CD8-positive, alpha-beta memory T cell (primary cell): ENCODE measurements at regions of chr6 and their contacts with region 1.

Region 1: GRCh38 chr6:118843685-118844390 is 50.1 kb upstream of the ASF1A start:
- DNase-seq: no peak
- H3K4me3 ChIP-seq: no peak overlapping the region
- H3K4me3 Mint-ChIP-seq: no peak overlapping the region
- H3K27ac ChIP-seq: no peak overlapping the region
- H3K27ac Mint-ChIP-seq: peak overlapping the region in 4 of 8 donors; percentile 0 to 48 (median 36)
- H3K4me1 ChIP-seq: no peaks in the 10 kb centered on the region
- H3K4me1 Mint-ChIP-seq: peaks cover 28 to 49% (median 36%) of the 10 kb centered on the region in 3 donors
- H3K27me3 ChIP-seq: no peaks in the 10 kb centered on the region
- H3K27me3 Mint-ChIP-seq: no peaks in the 10 kb centered on the region

Region 2: DNA sequence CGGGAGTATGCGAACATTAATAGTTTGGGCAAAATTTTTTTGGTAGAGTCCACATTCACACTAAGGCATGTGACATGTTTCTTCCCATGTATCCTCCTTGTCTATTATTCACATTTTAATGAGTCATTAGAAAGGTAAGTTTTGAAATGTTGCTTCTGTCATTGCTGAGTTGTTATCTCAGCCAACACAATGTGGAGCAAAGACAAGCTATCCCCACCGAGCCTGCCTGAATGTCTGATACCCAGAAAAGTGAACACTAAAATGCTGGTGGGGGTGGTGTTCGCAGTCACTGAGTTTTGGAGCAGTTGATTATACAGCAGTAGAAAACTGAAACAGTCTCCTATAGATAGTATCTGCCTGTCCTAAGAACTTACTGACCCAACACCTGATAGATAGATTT is 18.2 kb before region 1 on chr6:
- CTCF ChIA-PET with region 1: no interaction called
- POLR2A ChIA-PET with region 1: no interaction called
- DNase-seq: no peak
- H3K4me3 ChIP-seq: no peak overlapping the region
- H3K4me3 Mint-ChIP-seq: no peak overlapping the region
- H3K27ac ChIP-seq: no peak overlapping the region
- H3K27ac Mint-ChIP-seq: no peak overlapping the region
- H3K4me1 ChIP-seq: no peaks in the 10 kb centered on the region
- H3K4me1 Mint-ChIP-seq: peaks cover 0 to 1% (median 0%) of the 10 kb centered on the region in 3 donors
- H3K27me3 ChIP-seq: no peaks in the 10 kb centered on the region
- H3K27me3 Mint-ChIP-seq: no peaks in the 10 kb centered on the region

Region 3: GRCh38 chr6:118859517-118860064 is 15.8 kb after region 1 on chr6:
- CTCF ChIA-PET with region 1: no interaction called
- POLR2A ChIA-PET with region 1: interaction called, 11 read pairs
- DNase-seq: no peak
- H3K4me3 ChIP-seq: no peak overlapping the region
- H3K4me3 Mint-ChIP-seq: peak overlapping the region in 2 of 7 donors; percentile 20 to 25
- H3K27ac ChIP-seq: no peak overlapping the region
- H3K27ac Mint-ChIP-seq: peak overlapping the region in 3 of 8 donors; percentile 11 to 32 (median 17)
- H3K4me1 ChIP-seq: peaks cover 9% of the 10 kb centered on the region
- H3K4me1 Mint-ChIP-seq: peaks cover 43 to 63% (median 61%) of the 10 kb centered on the region in 3 donors
- H3K27me3 ChIP-seq: no peaks in the 10 kb centered on the region
- H3K27me3 Mint-ChIP-seq: no peaks in the 10 kb centered on the region

Region 4: DNA sequence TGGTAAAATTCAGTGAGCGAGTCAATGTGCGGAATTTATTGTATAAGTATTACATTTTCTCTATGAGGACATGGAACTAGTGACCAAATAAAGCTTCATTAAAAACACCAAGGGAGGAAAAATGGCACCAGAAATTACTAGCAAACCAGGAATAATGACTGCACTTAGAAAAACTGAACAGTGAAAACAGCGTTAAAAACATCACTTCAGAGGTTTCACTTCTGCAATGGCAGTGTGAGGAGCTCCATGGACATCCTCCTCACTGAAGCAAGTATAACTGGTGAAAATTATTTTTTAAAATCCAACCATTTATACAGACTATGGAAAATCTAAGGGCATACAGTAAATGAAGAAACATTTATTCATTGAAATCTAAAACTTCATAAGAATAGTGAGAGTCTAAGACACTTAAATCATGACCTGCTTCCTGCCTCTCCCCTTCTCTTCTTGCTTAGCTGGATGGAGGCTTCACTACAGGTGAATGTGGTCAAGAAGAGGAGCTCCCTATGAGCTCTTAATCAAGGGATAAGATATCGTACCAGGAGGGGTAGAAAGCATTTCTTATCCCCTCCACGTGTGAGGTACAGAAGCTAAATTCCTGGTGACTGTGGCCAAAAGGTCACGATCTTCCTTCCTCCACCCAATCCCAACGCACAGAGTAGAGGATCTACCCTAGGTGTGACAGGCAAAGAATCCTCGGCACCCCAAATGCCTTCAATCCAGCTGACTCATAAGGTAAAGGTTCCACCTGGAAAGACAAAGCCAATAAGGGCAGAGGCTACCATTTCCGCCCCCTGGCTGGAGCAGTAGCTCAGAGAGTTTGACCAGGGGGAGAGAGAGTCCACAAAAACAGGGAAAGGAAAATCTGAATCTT is 37.8 kb after region 1 on chr6:
- CTCF ChIA-PET with region 1: no interaction called
- POLR2A ChIA-PET with region 1: no interaction called
- DNase-seq: no peak
- H3K4me3 ChIP-seq: no peak overlapping the region
- H3K4me3 Mint-ChIP-seq: peak overlapping the region; percentile 11 to 71 (median 59)
- H3K27ac ChIP-seq: no peak overlapping the region
- H3K27ac Mint-ChIP-seq: peak overlapping the region in 6 of 8 donors; percentile 17 to 90 (median 32)
- H3K4me1 ChIP-seq: peaks cover 37% of the 10 kb centered on the region
- H3K4me1 Mint-ChIP-seq: peaks cover 75 to 88% (median 88%) of the 10 kb centered on the region in 3 donors
- H3K27me3 ChIP-seq: no peaks in the 10 kb centered on the region
- H3K27me3 Mint-ChIP-seq: peaks cover 0 to 2% of the 10 kb centered on the region in 2 donors